ENCODE measurements at regions of chr3 and their contacts with region 1.

Region 1: DNA sequence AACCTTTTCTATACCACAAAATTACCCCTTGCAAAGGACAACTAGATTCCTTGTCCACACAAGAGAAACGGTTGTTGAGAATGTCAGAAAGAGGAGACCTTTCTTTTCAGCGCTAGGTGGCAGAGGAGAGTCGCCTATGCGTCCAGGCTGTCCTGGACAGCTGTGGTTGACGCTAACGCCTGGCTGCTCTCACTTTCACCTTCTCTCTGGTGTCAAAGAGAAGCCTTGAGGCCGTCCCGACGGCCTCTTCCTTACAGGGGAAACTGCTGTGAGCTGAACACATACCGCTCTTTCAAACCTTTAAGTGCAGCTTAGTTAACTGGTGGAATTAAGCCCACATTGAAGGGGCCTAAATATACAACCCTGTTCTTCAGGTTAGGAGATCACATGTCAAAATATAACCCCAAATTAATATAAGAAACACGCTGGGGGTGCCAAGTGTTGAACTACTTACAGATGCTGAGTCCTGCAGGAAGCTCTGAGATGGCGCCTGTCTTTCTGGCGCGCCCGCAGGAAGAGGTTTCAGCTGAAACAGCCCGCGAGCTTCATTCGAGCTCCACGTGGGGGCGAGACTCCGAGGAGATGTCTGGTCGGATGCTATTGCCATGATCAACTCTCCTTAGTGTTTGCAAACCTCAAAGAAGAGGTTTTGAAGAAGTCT is 26.1 kb upstream of the KBTBD8 start:
- DNase-seq: peak; percentile 79
- ATAC-seq: peak; percentile 95
- H3K4me3 Mint-ChIP-seq: peak overlapping the region; percentile 68
- H3K27ac Mint-ChIP-seq: peak overlapping the region; percentile 69
- H3K4me1 Mint-ChIP-seq: peaks cover 16% of the 10 kb centered on the region
- H3K27me3 Mint-ChIP-seq: peaks cover 5% of the 10 kb centered on the region
- CTCF ChIP-seq: peak; percentile 90

Region 2: DNA sequence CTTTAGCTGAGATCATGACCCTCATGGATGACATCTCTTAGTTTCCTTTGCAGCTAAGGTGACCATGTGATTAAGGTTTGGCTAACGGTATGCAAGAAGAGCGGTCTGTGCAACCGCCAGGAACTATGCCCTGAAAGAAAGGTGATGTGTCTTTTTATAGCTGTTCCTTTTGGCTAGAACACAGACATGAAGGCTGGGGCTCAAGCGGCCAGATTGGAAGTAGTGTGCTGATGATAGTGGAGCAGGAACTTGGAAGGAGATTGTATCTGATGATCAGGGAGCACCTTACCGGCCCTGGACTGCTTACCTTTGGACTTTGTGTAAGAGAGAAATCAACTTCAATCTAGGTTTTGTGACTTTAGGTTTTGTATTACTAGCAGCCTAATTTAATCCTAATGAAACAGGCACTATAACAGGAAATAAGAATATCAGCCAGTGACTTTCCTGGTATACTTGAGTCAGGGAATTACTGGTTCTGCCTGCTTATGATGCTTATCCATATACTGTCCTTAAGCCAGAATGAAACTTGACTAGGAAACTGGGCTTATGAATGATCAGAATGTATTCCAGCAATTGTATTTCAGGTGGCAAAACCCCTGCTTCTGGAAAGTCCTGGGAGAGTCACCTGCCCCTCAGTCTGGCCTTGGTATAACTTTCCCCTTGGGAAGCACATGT is 306.9 kb before region 1 on chr3:
- CTCF ChIA-PET with region 1: no interaction called
- POLR2A ChIA-PET with region 1: no interaction called
- intact Hi-C with region 1: no loop called
- DNase-seq: no peak
- ATAC-seq: no peak
- H3K4me3 Mint-ChIP-seq: no peak overlapping the region
- H3K27ac Mint-ChIP-seq: no peak overlapping the region
- H3K4me1 Mint-ChIP-seq: no peaks in the 10 kb centered on the region
- H3K27me3 Mint-ChIP-seq: peaks cover 2% of the 10 kb centered on the region
- CTCF ChIP-seq: no peak

Region 3: GRCh38 chr3:66778777-66779176 is 193.2 kb before region 1 on chr3:
- CTCF ChIA-PET with region 1: no interaction called
- POLR2A ChIA-PET with region 1: no interaction called
- intact Hi-C with region 1: no loop called
- DNase-seq: no peak
- ATAC-seq: peak; percentile 45
- H3K4me3 Mint-ChIP-seq: no peak overlapping the region
- H3K27ac Mint-ChIP-seq: no peak overlapping the region
- H3K4me1 Mint-ChIP-seq: no peaks in the 10 kb centered on the region
- H3K27me3 Mint-ChIP-seq: peaks cover 9% of the 10 kb centered on the region
- CTCF ChIP-seq: no peak

Region 4: GRCh38 chr3:66952357-66952756 is 19.7 kb before region 1 on chr3:
- CTCF ChIA-PET with region 1: interaction called, 18 read pairs
- POLR2A ChIA-PET with region 1: interaction called, 3 read pairs
- intact Hi-C with region 1: no loop called
- DNase-seq: no peak
- ATAC-seq: no peak
- H3K4me3 Mint-ChIP-seq: no peak overlapping the region
- H3K27ac Mint-ChIP-seq: no peak overlapping the region
- H3K4me1 Mint-ChIP-seq: no peaks in the 10 kb centered on the region
- H3K27me3 Mint-ChIP-seq: peaks cover 2% of the 10 kb centered on the region
- CTCF ChIP-seq: no peak

Region 5: DNA sequence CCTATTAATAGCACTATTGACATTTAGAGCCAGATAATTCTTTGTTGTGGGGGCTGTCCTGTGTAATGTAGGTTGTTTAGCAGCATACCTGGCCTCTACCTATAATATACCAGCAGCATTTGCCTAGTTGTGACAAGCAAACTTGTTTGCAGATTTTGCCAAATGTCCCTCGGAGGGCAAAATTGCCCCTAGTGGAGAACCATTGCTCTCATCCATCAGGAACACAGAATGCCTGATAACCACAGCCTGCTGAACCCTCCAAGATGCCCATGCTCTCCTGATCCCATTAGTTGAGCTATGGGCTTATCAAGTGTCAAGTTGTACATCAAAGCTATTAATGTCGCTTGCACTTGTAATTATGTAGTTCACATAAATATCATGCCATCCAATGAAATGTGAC is 11.1 kb after region 1 on chr3:
- CTCF ChIA-PET with region 1: interaction called, 38 read pairs
- POLR2A ChIA-PET with region 1: no interaction called
- intact Hi-C with region 1: no loop called
- DNase-seq: no peak
- ATAC-seq: no peak
- H3K4me3 Mint-ChIP-seq: no peak overlapping the region
- H3K27ac Mint-ChIP-seq: no peak overlapping the region
- H3K4me1 Mint-ChIP-seq: no peaks in the 10 kb centered on the region
- H3K27me3 Mint-ChIP-seq: peaks cover 3% of the 10 kb centered on the region
- CTCF ChIP-seq: no peak

Region 6: GRCh38 chr3:66998113-66998903 is 26.3 kb after region 1 on chr3 and contains the start of gene KBTBD8:
- CTCF ChIA-PET with region 1: interaction called, 30 read pairs
- POLR2A ChIA-PET with region 1: interaction called, 7 read pairs
- intact Hi-C with region 1: no loop called
- DNase-seq: peak; percentile 98
- ATAC-seq: peak; percentile 95
- H3K4me3 Mint-ChIP-seq: peak within 1 kb of the TSS; percentile 98
- H3K27ac Mint-ChIP-seq: peak within 1 kb of the TSS; percentile 94
- H3K4me1 Mint-ChIP-seq: peaks cover 29% of the 10 kb centered on the region
- H3K27me3 Mint-ChIP-seq: peaks cover 9% of the 10 kb centered on the region
- CTCF ChIP-seq: no peak
- total RNA-seq, gene KBTBD8: 10.9 to 11.1 TPM

Region 7: GRCh38 chr3:67106874-67107273 is 134.9 kb after region 1 on chr3:
- CTCF ChIA-PET with region 1: interaction called, 13 read pairs
- POLR2A ChIA-PET with region 1: no interaction called
- intact Hi-C with region 1: loop called (anchors 2 kb)
- DNase-seq: no peak
- ATAC-seq: no peak
- H3K4me3 Mint-ChIP-seq: no peak overlapping the region
- H3K27ac Mint-ChIP-seq: no peak overlapping the region
- H3K4me1 Mint-ChIP-seq: no peaks in the 10 kb centered on the region
- H3K27me3 Mint-ChIP-seq: no peaks in the 10 kb centered on the region
- CTCF ChIP-seq: no peak